ENCODE measurements at regions of chr16 and their contacts with region 1.

Region 1: DNA sequence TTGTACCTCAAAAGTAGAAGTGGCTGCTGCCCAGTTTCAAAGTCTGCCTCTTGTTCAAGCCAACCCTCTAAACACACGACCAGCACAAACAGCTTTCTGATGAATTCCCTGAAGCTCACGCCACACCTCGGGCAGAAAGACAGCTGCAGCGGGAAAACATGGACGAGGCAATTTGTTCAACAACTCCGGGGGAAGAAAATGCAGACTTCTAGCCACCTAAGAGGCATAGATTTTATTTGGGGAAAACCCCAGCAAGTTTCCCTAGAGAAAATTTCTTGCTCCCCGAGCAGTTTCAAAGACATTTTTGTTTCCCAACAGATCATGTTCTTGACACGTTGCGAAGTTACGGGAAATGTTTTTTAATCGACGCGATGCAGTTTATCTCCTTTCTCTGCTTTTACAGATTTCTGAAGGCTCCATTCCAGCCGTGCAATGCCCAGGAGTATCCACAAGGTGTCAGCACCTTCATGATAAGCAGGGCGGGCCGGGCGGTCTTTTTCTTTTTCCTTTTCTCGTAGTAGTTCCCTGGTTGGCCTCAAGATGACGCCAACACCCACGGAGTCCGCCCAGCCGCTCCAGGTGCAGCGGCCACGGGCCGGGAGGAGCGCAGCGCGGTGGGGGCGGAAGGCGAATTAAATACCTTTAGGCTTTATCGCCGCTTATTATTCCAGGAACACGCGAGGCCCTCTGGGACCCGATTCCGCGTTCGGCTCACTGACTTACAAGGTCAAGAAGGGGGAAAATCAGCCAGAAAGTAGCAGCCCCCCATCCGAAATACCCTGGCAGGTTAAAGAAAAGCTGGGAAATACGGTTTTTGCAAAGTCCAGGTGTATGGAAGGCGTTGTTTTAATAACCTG is 2.9 kb upstream of the FOXC2 start:
- DNase-seq: peak; percentile 91
- H3K4me3 ChIP-seq: peak overlapping the region in 1 of 4 donors; percentile 23
- H3K27ac ChIP-seq: no peak overlapping the region
- H3K4me1 ChIP-seq: peaks cover 0 to 22% (median 10%) of the 10 kb centered on the region in 4 donors
- H3K27me3 ChIP-seq: peaks cover 78% of the 10 kb centered on the region
- CTCF ChIP-seq: peak; percentile 100
- EP300 ChIP-seq: no peak
- POLR2A ChIP-seq: no peak

Region 2: GRCh38 chr16:87062569-87063442 is 499.1 kb after region 1 on chr16:
- in situ Hi-C with region 1: loop called in 3 of 4 experiments (anchors 5 to 10 kb)
- intact Hi-C with region 1: loop called (anchors 5 kb)
- DNase-seq: peak; percentile 55
- H3K4me3 ChIP-seq: no peak overlapping the region
- H3K27ac ChIP-seq: no peak overlapping the region
- H3K4me1 ChIP-seq: no peaks in the 10 kb centered on the region
- H3K27me3 ChIP-seq: peaks cover 60% of the 10 kb centered on the region
- CTCF ChIP-seq: peak; percentile 64 to 75 (median 72)
- EP300 ChIP-seq: no peak
- POLR2A ChIP-seq: no peak

Region 3: DNA sequence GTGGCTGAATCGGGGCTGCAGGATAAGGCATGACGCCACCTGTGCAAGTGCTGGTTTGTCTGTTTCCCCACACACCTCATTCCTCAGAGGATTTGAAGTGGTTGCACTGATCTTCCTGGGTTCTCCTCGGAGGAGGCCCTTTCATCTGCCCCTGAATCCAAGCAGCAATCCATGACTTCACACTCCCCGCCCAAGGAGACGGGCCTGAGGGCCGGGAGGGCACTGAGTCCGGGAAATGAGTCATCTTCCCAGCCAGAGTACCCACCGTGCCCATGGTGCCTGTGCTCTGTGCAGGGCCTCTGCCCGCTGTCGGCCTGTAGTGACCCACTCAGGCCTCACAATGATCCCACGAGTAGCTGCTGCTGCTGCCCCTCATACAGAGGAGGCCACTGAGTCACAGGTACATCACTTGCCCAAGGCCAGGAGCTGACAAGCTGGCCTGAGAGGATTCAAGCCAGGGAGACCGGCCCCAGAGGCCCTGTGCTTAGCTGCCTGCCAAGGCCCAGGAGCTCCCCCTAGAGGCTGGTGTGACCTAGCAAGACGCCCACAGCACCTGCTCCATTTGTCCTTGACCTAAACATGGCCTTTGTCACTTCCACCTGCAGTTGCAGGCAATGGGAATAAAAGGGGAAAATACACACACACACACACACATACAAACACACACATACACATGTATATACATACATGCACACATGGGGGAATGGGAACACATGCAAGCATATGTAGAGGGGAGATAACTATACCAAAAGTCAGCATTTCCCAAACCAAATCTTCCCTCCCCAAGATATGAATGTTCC is 513.4 kb after region 1 on chr16:
- in situ Hi-C with region 1: loop called in 1 of 4 experiments (anchors 10 kb)
- intact Hi-C with region 1: loop called (anchors 5 kb)
- DNase-seq: peak; percentile 67
- H3K4me3 ChIP-seq: no peak overlapping the region
- H3K27ac ChIP-seq: no peak overlapping the region
- H3K4me1 ChIP-seq: no peaks in the 10 kb centered on the region
- H3K27me3 ChIP-seq: peaks cover 5% of the 10 kb centered on the region
- CTCF ChIP-seq: peak; percentile 20 to 55 (median 44)
- EP300 ChIP-seq: no peak
- POLR2A ChIP-seq: no peak

Region 4: GRCh38 chr16:87288753-87289362 is 725.1 kb after region 1 on chr16:
- in situ Hi-C with region 1: loop called in 2 of 4 experiments (anchors 10 to 25 kb)
- intact Hi-C with region 1: no loop called
- DNase-seq: no peak
- H3K4me3 ChIP-seq: no peak overlapping the region
- H3K27ac ChIP-seq: no peak overlapping the region
- H3K4me1 ChIP-seq: no peaks in the 10 kb centered on the region
- H3K27me3 ChIP-seq: no peaks in the 10 kb centered on the region
- CTCF ChIP-seq: no peak
- EP300 ChIP-seq: no peak
- POLR2A ChIP-seq: no peak